Right cardiac atrium (tissue), 5 donors: ENCODE measurements at regions of chr4 and their contacts with region 1.

Region 1: GRCh38 chr4:87965501-87965975 is 10.0 kb upstream of the SPP1 start:
- DNase-seq: no peak
- ATAC-seq: peak; percentile 23 to 26
- H3K4me3 ChIP-seq: no peak overlapping the region
- H3K27ac ChIP-seq: no peak overlapping the region
- H3K4me1 ChIP-seq: no peaks in the 10 kb centered on the region
- H3K27me3 ChIP-seq: no peaks in the 10 kb centered on the region

Region 2: DNA sequence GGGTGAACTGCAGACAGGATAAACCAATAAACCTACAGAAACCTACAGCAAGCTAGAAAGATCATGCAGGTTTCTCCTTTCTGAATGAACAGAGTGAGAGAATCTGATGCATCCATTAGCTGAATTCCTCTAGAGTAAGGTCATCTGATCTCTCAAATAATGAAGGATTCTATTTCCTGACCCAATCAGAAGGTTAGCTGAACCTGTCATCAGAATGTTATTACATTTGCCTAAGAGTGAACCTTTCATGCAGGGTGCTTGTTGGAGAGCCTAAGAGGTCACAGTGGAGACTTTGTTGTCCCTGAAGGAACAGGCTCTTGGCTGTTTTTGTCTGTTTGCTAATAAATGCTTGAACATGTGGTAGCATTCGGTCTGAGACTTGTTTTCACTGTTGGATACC is 108.7 kb before region 1 on chr4:
- intact Hi-C with region 1: loop called in 1 of 4 experiments (anchors 5 kb)
- DNase-seq: no peak
- ATAC-seq: no peak
- H3K4me3 ChIP-seq: no peak overlapping the region
- H3K27ac ChIP-seq: no peak overlapping the region
- H3K4me1 ChIP-seq: no peaks in the 10 kb centered on the region
- H3K27me3 ChIP-seq: no peaks in the 10 kb centered on the region

Region 3: DNA sequence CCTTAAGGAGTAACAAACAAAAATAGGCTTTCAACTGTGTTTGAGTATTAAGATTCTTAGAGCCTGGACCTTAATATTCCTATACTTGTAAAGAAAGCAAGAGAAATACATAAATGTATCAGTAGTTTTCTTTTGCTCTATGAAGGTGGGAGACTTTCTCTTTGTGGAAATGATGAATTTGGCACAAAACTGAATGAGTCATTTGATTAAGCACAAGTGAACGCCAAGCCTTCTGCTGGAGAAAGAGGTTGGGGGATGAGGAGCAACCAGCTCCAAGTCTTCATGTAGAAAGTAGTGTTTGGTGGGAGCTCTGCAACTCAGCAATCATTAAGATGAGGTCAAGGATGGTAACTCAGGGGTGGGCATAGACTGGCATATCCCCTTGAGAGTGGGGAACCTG is 83.2 kb before region 1 on chr4:
- intact Hi-C with region 1: no loop called
- DNase-seq: no peak
- ATAC-seq: no peak
- H3K4me3 ChIP-seq: no peak overlapping the region
- H3K27ac ChIP-seq: no peak overlapping the region
- H3K4me1 ChIP-seq: no peaks in the 10 kb centered on the region
- H3K27me3 ChIP-seq: no peaks in the 10 kb centered on the region

Region 4: GRCh38 chr4:88033309-88033708 is 67.8 kb after region 1 on chr4:
- intact Hi-C with region 1: no loop called
- DNase-seq: no peak
- ATAC-seq: peak; percentile 50 to 51
- H3K4me3 ChIP-seq: no peak overlapping the region
- H3K27ac ChIP-seq: no peak overlapping the region
- H3K4me1 ChIP-seq: no peaks in the 10 kb centered on the region
- H3K27me3 ChIP-seq: no peaks in the 10 kb centered on the region

Region 5: DNA sequence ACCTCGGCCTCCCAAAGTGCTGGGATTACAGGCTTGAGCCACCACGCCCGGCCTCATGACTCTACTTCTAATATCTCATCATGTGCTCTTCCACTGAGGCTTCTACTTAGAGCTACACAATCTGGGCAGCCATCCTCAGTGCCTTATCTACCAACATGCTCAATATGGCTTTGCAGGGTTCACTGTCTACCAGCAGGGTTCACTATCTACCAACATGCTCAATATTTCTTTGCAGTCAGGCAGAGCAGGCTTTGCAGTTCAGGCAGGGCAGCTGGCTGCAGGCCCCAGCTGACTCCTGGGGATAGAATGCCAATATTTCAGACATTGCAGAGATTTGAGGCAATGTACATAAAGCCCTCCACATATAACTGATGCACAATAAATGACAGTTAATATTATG is 89.4 kb after region 1 on chr4:
- intact Hi-C with region 1: no loop called
- DNase-seq: no peak
- ATAC-seq: peak; percentile 55 to 63
- H3K4me3 ChIP-seq: no peak overlapping the region
- H3K27ac ChIP-seq: no peak overlapping the region
- H3K4me1 ChIP-seq: peaks cover 2% of the 10 kb centered on the region
- H3K27me3 ChIP-seq: no peaks in the 10 kb centered on the region